Activated T-helper 1 cell treated with anti-CD3 and anti-CD28 coated beads, Interleukin-12 subunit alpha, Interleukin-12 subunit beta, Interleukin-2, Interleukin-4 antibody, amounts not matched to agents 30 ng/mL and 10 ng/mL and 1 ng/mL, durations not matched to agents 14 hours and 24 hours and 36 hours (primary cell): ENCODE measurements at regions of chr19 and their contacts with region 1.

Region 1: GRCh38 chr19:42132851-42133528 is 744 bp upstream of the POU2F2 start:
- DNase-seq: peak; percentile 85
- H3K4me3 Mint-ChIP-seq: peak overlapping the region; percentile 93
- H3K27ac Mint-ChIP-seq: peak overlapping the region; percentile 91
- H3K4me1 Mint-ChIP-seq: peaks cover 61% of the 10 kb centered on the region
- H3K27me3 Mint-ChIP-seq: no peaks in the 10 kb centered on the region

Region 2: DNA sequence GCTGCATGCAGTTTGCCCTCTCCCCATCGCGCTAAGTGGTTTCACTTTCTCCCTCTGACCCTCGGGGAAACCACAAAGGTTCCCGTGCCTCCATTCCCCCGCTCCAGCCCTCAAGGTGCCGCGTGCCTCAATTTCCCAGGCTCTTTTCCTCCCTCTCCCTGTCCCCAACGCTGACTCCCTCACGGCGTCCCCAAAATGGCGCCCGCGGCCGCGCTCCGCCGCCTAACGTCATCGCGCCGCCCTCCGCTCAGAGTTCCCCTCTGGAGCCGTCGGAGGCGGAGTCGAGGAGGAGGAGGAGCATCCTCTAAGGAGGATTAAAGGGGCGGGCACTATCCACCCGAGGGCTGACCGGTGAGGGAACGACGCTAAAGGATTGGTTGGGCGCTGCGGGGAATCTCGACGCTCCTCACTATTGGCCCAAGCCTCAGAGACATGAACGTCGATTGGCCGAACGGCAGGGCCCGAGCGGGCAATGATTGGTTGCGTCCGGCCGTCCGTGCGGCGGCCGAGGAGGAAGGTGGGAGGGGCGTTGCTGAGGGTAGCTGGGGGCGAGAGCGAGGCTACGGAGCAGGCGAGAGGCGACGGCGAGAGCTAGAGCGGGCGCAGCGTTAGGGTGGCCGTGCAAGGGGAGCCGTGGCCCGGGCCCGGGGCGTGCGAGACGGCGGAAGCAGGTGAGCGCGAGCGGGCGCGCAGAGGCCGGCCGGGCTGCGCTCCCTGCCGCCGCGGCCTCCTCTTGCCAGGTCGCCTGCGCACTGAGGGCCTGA is 57.2 kb before region 1 on chr19 and contains the start of gene ZNF574:
- intact Hi-C with region 1: loop called (anchors 1 kb)
- DNase-seq: peak; percentile 97
- H3K4me3 Mint-ChIP-seq: peak within 1 kb of the TSS; percentile 97
- H3K27ac Mint-ChIP-seq: peak within 1 kb of the TSS; percentile 99
- H3K4me1 Mint-ChIP-seq: peaks cover 37% of the 10 kb centered on the region
- H3K27me3 Mint-ChIP-seq: peaks cover 1% of the 10 kb centered on the region
- total RNA-seq, gene ZNF574: 17.5 and 17.8 TPM in 2 replicates

Region 3: DNA sequence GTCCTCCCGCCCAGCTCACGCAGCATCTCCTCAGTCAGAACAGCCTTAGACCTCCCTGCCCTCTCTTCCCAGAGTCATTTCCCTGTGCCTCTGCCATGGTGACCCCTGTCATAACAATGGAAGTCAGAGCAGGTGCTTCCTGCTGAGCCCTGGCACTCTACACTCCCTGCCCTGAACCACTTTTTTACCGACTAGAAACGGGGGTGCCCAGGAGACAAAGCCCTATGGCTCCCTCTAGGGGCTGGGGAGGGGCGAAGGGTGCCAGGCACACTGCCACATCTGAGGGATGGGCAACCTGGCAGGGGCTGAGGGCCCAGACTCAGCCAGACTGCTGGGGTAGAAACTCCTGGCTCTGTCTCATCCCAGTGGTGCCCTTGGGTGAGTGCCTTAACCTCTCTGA is 40.6 kb before region 1 on chr19:
- intact Hi-C with region 1: no loop called
- DNase-seq: peak; percentile 51
- H3K4me3 Mint-ChIP-seq: no peak overlapping the region
- H3K27ac Mint-ChIP-seq: peak overlapping the region; percentile 81
- H3K4me1 Mint-ChIP-seq: peaks cover 39% of the 10 kb centered on the region
- H3K27me3 Mint-ChIP-seq: no peaks in the 10 kb centered on the region

Region 4: GRCh38 chr19:42166316-42166715 is 33.3 kb after region 1 on chr19:
- intact Hi-C with region 1: no loop called
- DNase-seq: no peak
- H3K4me3 Mint-ChIP-seq: no peak overlapping the region
- H3K27ac Mint-ChIP-seq: no peak overlapping the region
- H3K4me1 Mint-ChIP-seq: peaks cover 7% of the 10 kb centered on the region
- H3K27me3 Mint-ChIP-seq: peaks cover 4% of the 10 kb centered on the region

Region 5: DNA sequence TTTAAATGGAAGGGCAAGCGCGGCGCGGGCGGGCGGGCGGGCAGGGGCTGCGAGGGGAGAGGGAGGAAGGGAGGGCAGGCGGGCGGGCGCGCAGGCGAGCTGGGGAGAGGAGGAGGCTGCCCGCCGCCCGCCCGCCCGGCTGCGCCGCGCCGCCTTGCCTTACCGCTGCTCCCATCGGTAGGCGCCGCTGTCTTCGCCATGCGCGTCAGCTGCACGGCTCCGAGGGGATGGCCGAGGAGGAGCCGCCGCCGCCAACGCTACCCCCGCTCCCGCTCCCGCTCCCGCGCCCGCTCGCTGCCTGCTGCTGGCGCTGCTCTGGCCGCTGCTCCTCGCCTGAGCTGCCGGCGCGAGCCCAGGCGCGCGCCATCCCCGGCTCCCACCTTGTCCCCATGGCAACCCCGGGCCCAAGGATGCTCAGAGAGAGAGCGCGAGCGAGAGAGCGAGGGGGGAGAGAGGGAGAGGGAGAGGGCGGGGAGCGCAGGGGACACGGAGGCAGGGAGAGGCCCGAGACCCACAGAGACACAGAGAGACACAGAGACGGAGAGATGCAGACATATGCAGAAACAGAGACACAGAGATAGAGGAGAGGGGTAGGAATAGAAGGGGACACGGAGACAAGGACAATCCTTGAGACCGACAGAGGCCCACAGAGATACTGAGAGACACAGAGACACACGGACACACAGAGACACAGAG is 44.1 kb after region 1 on chr19:
- intact Hi-C with region 1: loop called (anchors 1 kb)
- DNase-seq: peak; percentile 71
- H3K4me3 Mint-ChIP-seq: no peak overlapping the region
- H3K27ac Mint-ChIP-seq: no peak overlapping the region
- H3K4me1 Mint-ChIP-seq: peaks cover 19% of the 10 kb centered on the region
- H3K27me3 Mint-ChIP-seq: peaks cover 38% of the 10 kb centered on the region

Region 6: DNA sequence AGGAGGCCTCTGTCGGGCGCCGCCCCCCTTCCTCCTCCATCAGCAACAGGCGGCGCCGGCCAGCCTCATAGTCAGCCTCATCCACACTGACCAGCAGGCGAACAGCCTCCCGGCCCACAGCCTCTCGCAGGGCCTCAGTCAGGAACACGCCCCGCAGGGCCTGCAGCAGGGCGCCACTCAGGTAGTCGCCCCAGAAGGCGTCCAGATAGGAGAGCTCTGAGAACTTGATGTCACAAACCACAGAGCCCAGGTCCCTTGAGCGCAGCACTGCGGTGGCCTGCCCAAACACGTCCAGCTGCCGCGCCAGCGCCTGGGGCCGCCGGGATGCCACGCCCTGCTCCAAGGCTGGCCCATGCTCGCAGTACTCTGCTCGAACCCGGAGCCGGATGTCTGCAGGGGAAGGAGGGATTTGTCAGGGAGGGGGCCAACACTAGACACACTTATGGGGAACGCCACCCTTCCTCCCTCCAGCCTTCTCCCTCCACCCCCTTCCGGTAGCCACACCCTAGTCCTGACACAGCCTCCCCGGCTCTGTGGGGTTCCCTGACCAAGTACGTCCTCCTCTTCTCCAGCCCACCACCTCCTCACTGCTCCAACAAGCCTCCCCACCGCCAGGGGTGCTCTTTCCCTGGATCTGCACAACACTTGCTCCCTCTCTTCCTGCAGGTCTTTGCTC is 66.6 kb after region 1 on chr19:
- intact Hi-C with region 1: loop called (anchors 1 kb)
- DNase-seq: peak; percentile 75
- H3K4me3 Mint-ChIP-seq: peak overlapping the region; percentile 77
- H3K27ac Mint-ChIP-seq: peak overlapping the region; percentile 92
- H3K4me1 Mint-ChIP-seq: peaks cover 83% of the 10 kb centered on the region
- H3K27me3 Mint-ChIP-seq: no peaks in the 10 kb centered on the region

Region 7: DNA sequence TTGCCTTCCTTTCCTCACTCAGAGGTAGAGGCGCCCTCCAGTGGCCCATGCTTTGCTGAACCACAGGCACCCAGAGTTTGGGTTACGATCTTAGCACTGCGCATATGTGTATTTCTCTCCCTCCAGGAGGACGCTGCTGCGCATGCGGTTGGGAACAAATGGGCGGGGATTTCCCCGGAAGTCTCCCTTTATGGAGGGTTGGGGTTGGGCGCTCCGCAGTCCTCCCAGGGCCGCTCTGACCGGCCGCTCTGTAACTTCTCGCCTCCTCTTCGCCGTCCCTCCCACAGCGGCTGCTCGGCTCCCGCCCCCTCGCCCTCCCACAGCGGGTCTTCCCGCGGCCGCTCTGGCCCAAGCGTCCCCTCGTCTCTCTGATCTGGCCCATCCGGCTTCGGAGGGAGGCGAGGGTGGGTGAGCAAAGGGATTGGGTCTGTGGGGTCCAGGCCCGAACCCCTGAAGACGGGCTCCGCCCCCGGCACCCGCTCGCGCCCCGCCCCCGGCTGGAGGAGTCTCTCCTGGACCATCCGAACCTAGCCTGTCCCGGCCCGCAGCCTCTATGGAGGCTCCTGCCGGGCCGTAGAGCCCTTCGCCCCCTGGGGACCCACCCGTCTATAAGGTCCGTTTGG is 192.4 kb after region 1 on chr19 and contains the start of gene MEGF8:
- intact Hi-C with region 1: loop called (anchors 1 kb)
- DNase-seq: peak; percentile 98
- H3K4me3 Mint-ChIP-seq: peak within 1 kb of the TSS; percentile 90
- H3K27ac Mint-ChIP-seq: peak within 1 kb of the TSS; percentile 53
- H3K4me1 Mint-ChIP-seq: peaks cover 15% of the 10 kb centered on the region
- H3K27me3 Mint-ChIP-seq: peaks cover 32% of the 10 kb centered on the region
- total RNA-seq, gene MEGF8: 7.5 and 7.8 TPM in 2 replicates